Activated CD4-positive, alpha-beta memory T cell treated with anti-CD3 and anti-CD28 coated beads for 36 hours (primary cell): ENCODE measurements at regions of chr10 and their contacts with region 1.

Region 1: DNA sequence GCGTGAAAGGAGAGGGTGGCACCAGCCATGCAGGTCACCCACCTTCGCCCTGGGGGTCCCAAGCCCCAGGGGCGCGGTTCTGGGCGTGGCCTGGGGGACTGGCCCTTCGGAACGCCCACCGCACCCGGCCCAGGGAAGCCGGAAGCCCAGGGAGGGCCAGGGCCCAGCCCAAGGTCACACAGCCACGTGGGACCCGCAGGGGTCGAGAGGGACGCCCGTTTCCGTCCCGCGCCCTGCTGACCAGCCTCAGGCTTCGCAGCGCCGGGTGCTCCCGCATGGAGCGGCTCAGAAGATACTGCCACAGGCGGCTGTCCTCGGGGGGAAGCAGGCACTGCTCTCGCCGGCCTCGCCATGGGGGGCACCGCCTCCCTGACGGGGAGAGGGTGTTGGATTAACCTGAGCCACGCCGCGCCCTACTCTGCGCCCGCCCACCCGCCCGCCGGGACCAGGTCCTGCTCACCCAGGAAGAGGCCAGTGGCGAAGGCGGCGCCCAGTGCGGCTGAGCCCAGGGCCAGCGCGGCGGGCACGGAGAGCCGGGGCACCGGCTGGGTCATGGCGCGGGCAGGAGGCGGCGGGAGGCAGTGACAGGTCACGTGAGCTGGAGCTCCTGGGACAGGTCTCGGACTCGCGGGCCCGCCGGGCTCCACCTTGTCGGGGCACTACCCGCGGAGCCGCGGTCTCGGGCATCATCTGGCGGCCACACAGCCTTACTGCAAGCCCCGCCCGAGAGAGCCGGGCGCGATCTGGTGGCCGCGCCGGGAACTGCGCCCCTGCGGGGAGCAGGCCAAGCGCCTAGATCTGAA is at the start of gene COMTD1:
- DNase-seq: peak; percentile 96
- H3K4me3 Mint-ChIP-seq: peak within 1 kb of the TSS; percentile 73
- H3K27ac Mint-ChIP-seq: peak within 1 kb of the TSS; percentile 65
- H3K4me1 Mint-ChIP-seq: peaks cover 21% of the 10 kb centered on the region
- H3K27me3 Mint-ChIP-seq: no peaks in the 10 kb centered on the region
- total RNA-seq, gene COMTD1: 40.0 to 41.3 TPM

Region 2: GRCh38 chr10:74176380-74177139 is 1059.0 kb before region 1 on chr10:
- CTCF ChIA-PET with region 1: no interaction called
- POLR2A ChIA-PET with region 1: no interaction called
- intact Hi-C with region 1: loop called (anchors 10 kb)
- DNase-seq: peak; percentile 98
- H3K4me3 Mint-ChIP-seq: peak overlapping the region; percentile 87
- H3K27ac Mint-ChIP-seq: peak overlapping the region; percentile 92
- H3K4me1 Mint-ChIP-seq: peaks cover 35% of the 10 kb centered on the region
- H3K27me3 Mint-ChIP-seq: no peaks in the 10 kb centered on the region

Region 3: DNA sequence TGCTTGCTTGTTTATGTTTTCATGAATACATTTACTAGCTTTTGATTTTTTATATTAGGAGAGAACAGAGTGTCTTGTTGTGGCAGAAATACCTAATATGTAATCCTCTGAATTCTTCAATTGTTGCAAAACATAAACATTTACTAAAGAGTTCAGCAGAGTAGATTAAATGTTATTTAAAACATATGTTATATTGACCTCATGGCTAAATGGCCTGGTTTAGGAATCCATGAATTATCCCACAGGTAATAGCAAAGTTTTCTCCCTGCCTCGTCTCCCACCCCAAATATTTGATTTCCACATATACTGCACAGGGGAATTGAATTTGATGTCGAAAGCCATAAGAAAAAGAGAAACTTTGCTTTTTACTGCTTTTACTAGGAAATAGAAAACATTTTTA is 972.7 kb before region 1 on chr10:
- CTCF ChIA-PET with region 1: no interaction called
- POLR2A ChIA-PET with region 1: no interaction called
- intact Hi-C with region 1: loop called (anchors 1 kb)
- DNase-seq: no peak
- H3K4me3 Mint-ChIP-seq: no peak overlapping the region
- H3K27ac Mint-ChIP-seq: no peak overlapping the region
- H3K4me1 Mint-ChIP-seq: peaks cover 7% of the 10 kb centered on the region
- H3K27me3 Mint-ChIP-seq: no peaks in the 10 kb centered on the region

Region 4: DNA sequence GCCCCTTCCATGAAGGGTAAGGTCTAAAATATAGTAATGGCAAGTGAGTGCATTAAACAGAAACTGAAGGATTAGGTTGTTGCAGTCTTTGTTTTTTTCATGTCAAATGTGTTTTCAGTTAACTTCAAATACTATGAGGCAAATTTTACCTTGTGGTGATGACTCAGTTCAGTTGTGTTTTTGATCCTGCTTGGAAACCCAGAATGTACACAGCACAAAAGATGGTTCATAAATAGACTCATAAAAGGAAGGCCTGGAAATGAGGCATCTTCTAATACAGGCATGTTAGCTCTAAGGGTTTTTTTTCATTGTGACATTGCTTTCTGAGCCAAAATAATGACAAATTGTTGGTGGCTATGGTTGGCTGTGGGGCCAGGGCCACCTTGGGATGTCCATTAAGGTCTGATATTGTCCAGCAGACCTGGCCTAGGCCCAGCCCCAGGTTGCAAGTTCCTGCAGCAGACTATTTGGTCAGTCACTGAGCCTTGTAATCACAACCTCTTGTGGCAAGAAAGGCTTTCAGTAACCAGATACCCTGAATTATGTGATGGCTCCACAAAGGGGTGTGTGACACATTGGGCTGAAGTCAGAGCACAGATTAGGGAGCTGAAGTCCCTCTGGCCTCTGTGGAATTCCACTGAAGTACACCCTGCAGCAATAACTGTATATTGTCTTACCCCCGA is 193.1 kb before region 1 on chr10:
- CTCF ChIA-PET with region 1: no interaction called
- POLR2A ChIA-PET with region 1: no interaction called
- intact Hi-C with region 1: loop called (anchors 5 kb)
- DNase-seq: peak; percentile 42
- H3K4me3 Mint-ChIP-seq: peak overlapping the region; percentile 12
- H3K27ac Mint-ChIP-seq: peak overlapping the region; percentile 88
- H3K4me1 Mint-ChIP-seq: peaks cover 59% of the 10 kb centered on the region
- H3K27me3 Mint-ChIP-seq: no peaks in the 10 kb centered on the region

Region 5: DNA sequence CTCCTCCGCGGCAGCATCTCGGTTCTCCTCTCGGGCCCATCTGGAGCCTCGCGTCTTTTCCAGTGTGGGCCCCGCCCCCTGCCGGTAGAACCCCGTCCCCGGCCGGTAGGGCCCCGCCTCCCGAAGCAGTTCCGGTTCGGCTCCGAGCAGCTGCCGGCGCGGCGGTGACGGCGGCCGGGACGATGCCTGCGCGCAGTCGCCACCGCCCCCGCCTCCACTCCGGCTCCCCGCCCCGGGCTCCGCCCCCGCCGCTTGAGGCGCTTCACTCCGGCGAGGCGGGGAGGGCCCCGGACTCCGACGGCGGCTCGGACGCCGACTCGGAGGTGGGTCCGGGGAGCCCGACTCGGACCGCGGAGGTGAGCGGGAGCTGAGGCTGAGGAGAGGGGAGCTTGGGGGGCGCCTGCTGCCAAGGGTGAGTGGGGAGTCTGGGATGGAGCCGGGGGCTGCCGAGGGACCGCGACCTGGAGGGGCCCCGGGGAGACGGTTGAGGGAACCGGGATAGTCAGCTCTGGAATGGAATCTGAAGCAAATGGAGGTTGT is 124.1 kb before region 1 on chr10 and contains the start of gene SAMD8:
- CTCF ChIA-PET with region 1: interaction called, 10 read pairs
- POLR2A ChIA-PET with region 1: interaction called, 7 read pairs
- intact Hi-C with region 1: loop called (anchors 1 kb)
- DNase-seq: peak; percentile 99
- H3K4me3 Mint-ChIP-seq: peak within 1 kb of the TSS; percentile 97
- H3K27ac Mint-ChIP-seq: peak within 1 kb of the TSS; percentile 99
- H3K4me1 Mint-ChIP-seq: peaks cover 52% of the 10 kb centered on the region
- H3K27me3 Mint-ChIP-seq: no peaks in the 10 kb centered on the region
- total RNA-seq, gene SAMD8: 18.5 to 20.5 TPM

Region 6: GRCh38 chr10:75210282-75211006 is 25.1 kb before region 1 on chr10 and contains the start of gene VDAC2:
- CTCF ChIA-PET with region 1: interaction called, 98 read pairs
- POLR2A ChIA-PET with region 1: interaction called, 54 read pairs
- intact Hi-C with region 1: loop called (anchors 1 kb)
- DNase-seq: peak; percentile 95
- H3K4me3 Mint-ChIP-seq: peak within 1 kb of the TSS; percentile 89
- H3K27ac Mint-ChIP-seq: peak within 1 kb of the TSS; percentile 98
- H3K4me1 Mint-ChIP-seq: peaks cover 36% of the 10 kb centered on the region
- H3K27me3 Mint-ChIP-seq: no peaks in the 10 kb centered on the region
- total RNA-seq, gene VDAC2: 217 to 221 TPM

Region 7: GRCh38 chr10:75302029-75302428 is 66.5 kb after region 1 on chr10:
- CTCF ChIA-PET with region 1: no interaction called
- POLR2A ChIA-PET with region 1: no interaction called
- intact Hi-C with region 1: no loop called
- DNase-seq: no peak
- H3K4me3 Mint-ChIP-seq: no peak overlapping the region
- H3K27ac Mint-ChIP-seq: no peak overlapping the region
- H3K4me1 Mint-ChIP-seq: no peaks in the 10 kb centered on the region
- H3K27me3 Mint-ChIP-seq: peaks cover 8% of the 10 kb centered on the region